ENCODE measurements at regions of chr4 and their contacts with region 1.

Region 1: GRCh38 chr4:6327041-6327917 is 57.6 kb downstream of the WFS1 start:
- DNase-seq: peak; percentile 68 to 74 (median 70)
- H3K4me3 ChIP-seq: no peak overlapping the region
- H3K4me3 Mint-ChIP-seq: no peak overlapping the region
- H3K27ac ChIP-seq: no peak overlapping the region
- H3K27ac Mint-ChIP-seq: no peak overlapping the region
- H3K4me1 ChIP-seq: no peaks in the 10 kb centered on the region
- H3K4me1 Mint-ChIP-seq: peaks cover 0 to 3% (median 0%) of the 10 kb centered on the region in 4 donors
- H3K27me3 ChIP-seq: peaks cover 10% of the 10 kb centered on the region
- H3K27me3 Mint-ChIP-seq: peaks cover 9 to 10% of the 10 kb centered on the region in 2 donors

Region 2: GRCh38 chr4:4488405-4489404 is 1838.6 kb before region 1 on chr4:
- CTCF ChIA-PET with region 1: no interaction called
- POLR2A ChIA-PET with region 1: no interaction called
- intact Hi-C with region 1: loop called (anchors 5 kb)
- DNase-seq: peak; percentile 59 to 68 (median 67)
- H3K4me3 ChIP-seq: no peak overlapping the region
- H3K4me3 Mint-ChIP-seq: no peak overlapping the region
- H3K27ac ChIP-seq: no peak overlapping the region
- H3K27ac Mint-ChIP-seq: no peak overlapping the region
- H3K4me1 ChIP-seq: peaks cover 5% of the 10 kb centered on the region
- H3K4me1 Mint-ChIP-seq: peaks cover 5 to 15% (median 9%) of the 10 kb centered on the region in 4 donors
- H3K27me3 ChIP-seq: no peaks in the 10 kb centered on the region
- H3K27me3 Mint-ChIP-seq: no peaks in the 10 kb centered on the region

Region 3: GRCh38 chr4:6134612-6135220 is 192.6 kb before region 1 on chr4:
- CTCF ChIA-PET with region 1: interaction called, 40 read pairs
- POLR2A ChIA-PET with region 1: no interaction called
- intact Hi-C with region 1: no loop called
- DNase-seq: peak; percentile 48 to 75 (median 60)
- H3K4me3 ChIP-seq: no peak overlapping the region
- H3K4me3 Mint-ChIP-seq: no peak overlapping the region
- H3K27ac ChIP-seq: no peak overlapping the region
- H3K27ac Mint-ChIP-seq: peak overlapping the region; percentile 6 to 78 (median 49)
- H3K4me1 ChIP-seq: peaks cover 11% of the 10 kb centered on the region
- H3K4me1 Mint-ChIP-seq: peaks cover 6 to 20% (median 14%) of the 10 kb centered on the region in 4 donors
- H3K27me3 ChIP-seq: no peaks in the 10 kb centered on the region
- H3K27me3 Mint-ChIP-seq: no peaks in the 10 kb centered on the region

Region 4: DNA sequence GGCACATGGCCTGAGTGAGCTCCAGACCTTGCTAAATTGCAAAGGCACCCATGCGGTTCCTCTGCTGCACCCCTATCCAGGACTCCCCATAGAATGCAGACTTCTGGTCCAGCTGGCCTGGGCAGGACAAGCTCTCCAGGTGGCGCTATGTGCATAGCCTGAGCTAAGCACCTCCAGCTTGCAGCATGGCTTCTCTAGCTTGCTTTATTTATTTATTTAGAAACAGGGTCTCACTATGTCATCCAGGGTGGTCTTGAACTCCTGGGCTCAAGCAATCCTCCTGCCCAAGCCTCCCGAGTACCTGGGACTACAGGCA is 63.1 kb before region 1 on chr4:
- CTCF ChIA-PET with region 1: interaction called, 20 read pairs
- POLR2A ChIA-PET with region 1: interaction called, 3 read pairs
- intact Hi-C with region 1: no loop called
- DNase-seq: peak in 1 of 5 donors; percentile 5
- H3K4me3 ChIP-seq: no peak overlapping the region
- H3K4me3 Mint-ChIP-seq: no peak overlapping the region
- H3K27ac ChIP-seq: no peak overlapping the region
- H3K27ac Mint-ChIP-seq: no peak overlapping the region
- H3K4me1 ChIP-seq: peaks cover 5% of the 10 kb centered on the region
- H3K4me1 Mint-ChIP-seq: peaks cover 6 to 15% (median 8%) of the 10 kb centered on the region in 4 donors
- H3K27me3 ChIP-seq: no peaks in the 10 kb centered on the region
- H3K27me3 Mint-ChIP-seq: peaks cover 5 to 14% of the 10 kb centered on the region in 2 donors

Region 5: GRCh38 chr4:6342530-6343293 is 15.4 kb after region 1 on chr4:
- CTCF ChIA-PET with region 1: interaction called, 24 read pairs
- POLR2A ChIA-PET with region 1: interaction called, 3 read pairs
- intact Hi-C with region 1: no loop called
- DNase-seq: no peak
- H3K4me3 ChIP-seq: no peak overlapping the region
- H3K4me3 Mint-ChIP-seq: no peak overlapping the region
- H3K27ac ChIP-seq: no peak overlapping the region
- H3K27ac Mint-ChIP-seq: no peak overlapping the region
- H3K4me1 ChIP-seq: peaks cover 16% of the 10 kb centered on the region
- H3K4me1 Mint-ChIP-seq: peaks cover 13 to 29% (median 16%) of the 10 kb centered on the region in 4 donors
- H3K27me3 ChIP-seq: no peaks in the 10 kb centered on the region
- H3K27me3 Mint-ChIP-seq: peaks cover 3 to 7% of the 10 kb centered on the region in 2 donors